K562 (cell line): ENCODE measurements at regions of chr13 and their contacts with region 1.

Region 1: DNA sequence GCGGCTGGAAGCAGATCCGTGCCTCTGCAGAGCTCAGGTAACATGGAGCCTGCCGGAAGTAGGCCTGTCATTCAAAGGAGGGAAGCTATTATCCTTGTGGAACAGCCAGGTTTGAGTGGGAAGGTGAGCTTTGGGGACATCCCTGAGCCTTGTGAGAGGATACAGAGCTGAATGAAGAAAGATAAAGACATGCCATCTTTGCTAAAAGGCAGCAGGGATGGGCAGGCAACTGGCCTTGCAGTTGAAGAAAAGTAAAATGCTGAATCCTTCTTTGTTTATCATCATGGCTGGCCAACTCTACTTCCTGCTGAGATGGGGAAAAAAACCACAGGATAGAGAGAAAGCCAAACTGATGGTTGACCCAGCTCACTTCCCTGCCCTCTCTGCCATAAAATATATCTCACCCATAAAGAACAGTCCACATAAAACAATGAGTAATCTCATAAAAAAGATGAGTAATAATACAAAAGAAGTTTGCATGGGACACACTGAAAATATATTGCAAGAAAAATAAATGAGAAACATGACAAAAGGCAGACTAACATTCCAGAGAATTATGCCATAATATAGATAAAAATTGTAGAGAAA is 226.3 kb downstream of the DLEU7 start:
- DNase-seq: no peak
- ATAC-seq: no peak
- H3K4me3 ChIP-seq: no peak overlapping the region
- H3K27ac ChIP-seq: no peak overlapping the region
- H3K4me1 ChIP-seq: peaks cover 3 to 23% of the 10 kb centered on the region in 2 experiments; a peak in 3 of 5 replicates
- H3K27me3 ChIP-seq: no peaks in the 10 kb centered on the region
- CTCF ChIP-seq: no peak
- EP300 ChIP-seq: no peak
- POLR2A ChIP-seq: no peak
- RAD21 ChIP-seq: no peak

Region 2: GRCh38 chr13:50512474-50513299 is 104.5 kb before region 1 on chr13:
- CTCF ChIA-PET with region 1: no interaction called
- POLR2A ChIA-PET with region 1: no interaction called
- in situ Hi-C with region 1: no loop called
- intact Hi-C with region 1: loop called (anchors 5 kb)
- DNase-seq: peak in 2 of 4 experiments; percentile 25 to 38
- ATAC-seq: peak; percentile 89
- H3K4me3 ChIP-seq: peak overlapping the region; percentile 18; the same call in 1 of the 2 replicates
- H3K27ac ChIP-seq: peak overlapping the region; percentile 50
- H3K4me1 ChIP-seq: peaks cover 0 to 18% of the 10 kb centered on the region in 2 experiments; a peak in 4 of 5 replicates
- H3K27me3 ChIP-seq: no peaks in the 10 kb centered on the region
- CTCF ChIP-seq: 0 out of 6 replicates have a peak, but pooled peaks of 1 of the 3 experiments have one; percentile 5
- EP300 ChIP-seq: no peak
- POLR2A ChIP-seq: no peak
- RAD21 ChIP-seq: no peak